ENCODE measurements at regions of chr10 and their contacts with region 1.

Region 1: GRCh38 chr10:35442028-35442427 is 105.7 kb downstream of the CCNY start:
- DNase-seq: peak; percentile 43
- H3K4me3 Mint-ChIP-seq: peak overlapping the region; percentile 16
- H3K27ac Mint-ChIP-seq: peak overlapping the region; percentile 87
- H3K4me1 Mint-ChIP-seq: peaks cover 48% of the 10 kb centered on the region
- H3K27me3 Mint-ChIP-seq: no peaks in the 10 kb centered on the region

Region 2: DNA sequence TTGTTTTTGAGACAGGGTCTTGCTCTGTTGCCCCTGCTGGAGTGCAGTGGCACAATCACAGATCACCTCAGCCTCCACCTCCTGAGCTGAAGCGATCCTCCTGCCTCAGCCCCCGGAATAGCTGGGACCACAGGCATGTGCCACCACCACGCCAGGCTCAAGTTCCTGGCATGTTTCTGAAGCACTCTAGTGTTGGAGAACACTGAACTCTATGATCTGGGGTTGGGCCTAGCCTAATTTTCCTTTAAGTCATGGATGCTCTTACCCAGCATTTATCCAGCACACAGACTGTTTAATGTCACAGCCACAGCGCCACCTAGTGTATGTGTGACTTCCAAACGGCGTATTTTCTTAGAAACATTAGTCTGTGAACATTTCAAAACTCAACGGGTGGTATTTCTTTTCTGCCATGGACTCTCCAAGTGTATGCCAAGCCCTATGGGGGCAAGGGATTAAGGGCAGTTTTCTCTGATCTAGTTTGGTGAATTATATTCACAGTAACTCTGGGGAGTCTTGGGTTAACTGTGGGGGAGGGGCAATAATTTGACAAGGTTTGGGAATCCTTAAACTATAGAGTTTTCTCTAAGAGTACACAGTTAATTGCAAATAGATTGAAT is 223.6 kb before region 1 on chr10:
- CTCF ChIA-PET with region 1: interaction called, 3 read pairs
- POLR2A ChIA-PET with region 1: no interaction called
- intact Hi-C with region 1: loop called (anchors 5 kb)
- DNase-seq: peak; percentile 90
- H3K4me3 Mint-ChIP-seq: peak overlapping the region; percentile 43
- H3K27ac Mint-ChIP-seq: peak overlapping the region; percentile 81
- H3K4me1 Mint-ChIP-seq: peaks cover 48% of the 10 kb centered on the region
- H3K27me3 Mint-ChIP-seq: no peaks in the 10 kb centered on the region

Region 3: DNA sequence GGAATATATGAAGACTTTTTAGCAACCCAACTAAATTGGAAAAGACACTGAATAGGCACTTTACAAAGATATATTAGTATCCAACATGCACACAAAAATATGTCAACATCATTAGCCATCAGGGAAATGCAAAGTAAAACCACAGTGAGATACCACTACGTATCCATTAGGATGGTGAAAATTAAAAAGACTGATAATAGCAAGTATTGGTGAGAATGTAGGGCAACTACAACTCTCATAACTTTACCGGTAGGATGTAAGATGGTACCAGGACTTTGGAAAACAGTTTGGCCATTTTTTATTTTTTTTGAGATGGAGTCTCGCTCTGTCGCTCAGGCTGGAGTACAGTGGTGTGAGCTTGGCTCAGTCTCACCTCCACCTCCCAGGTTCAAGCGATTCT is 119.4 kb before region 1 on chr10:
- CTCF ChIA-PET with region 1: no interaction called
- POLR2A ChIA-PET with region 1: no interaction called
- intact Hi-C with region 1: no loop called
- DNase-seq: no peak
- H3K4me3 Mint-ChIP-seq: no peak overlapping the region
- H3K27ac Mint-ChIP-seq: no peak overlapping the region
- H3K4me1 Mint-ChIP-seq: peaks cover 5% of the 10 kb centered on the region
- H3K27me3 Mint-ChIP-seq: no peaks in the 10 kb centered on the region

Region 4: GRCh38 chr10:35341521-35341920 is 100.5 kb before region 1 on chr10:
- CTCF ChIA-PET with region 1: no interaction called
- POLR2A ChIA-PET with region 1: interaction called, 3 read pairs
- intact Hi-C with region 1: loop called (anchors 1 kb)
- DNase-seq: no peak
- H3K4me3 Mint-ChIP-seq: no peak overlapping the region
- H3K27ac Mint-ChIP-seq: peak overlapping the region; percentile 10
- H3K4me1 Mint-ChIP-seq: peaks cover 71% of the 10 kb centered on the region
- H3K27me3 Mint-ChIP-seq: no peaks in the 10 kb centered on the region

Region 5: DNA sequence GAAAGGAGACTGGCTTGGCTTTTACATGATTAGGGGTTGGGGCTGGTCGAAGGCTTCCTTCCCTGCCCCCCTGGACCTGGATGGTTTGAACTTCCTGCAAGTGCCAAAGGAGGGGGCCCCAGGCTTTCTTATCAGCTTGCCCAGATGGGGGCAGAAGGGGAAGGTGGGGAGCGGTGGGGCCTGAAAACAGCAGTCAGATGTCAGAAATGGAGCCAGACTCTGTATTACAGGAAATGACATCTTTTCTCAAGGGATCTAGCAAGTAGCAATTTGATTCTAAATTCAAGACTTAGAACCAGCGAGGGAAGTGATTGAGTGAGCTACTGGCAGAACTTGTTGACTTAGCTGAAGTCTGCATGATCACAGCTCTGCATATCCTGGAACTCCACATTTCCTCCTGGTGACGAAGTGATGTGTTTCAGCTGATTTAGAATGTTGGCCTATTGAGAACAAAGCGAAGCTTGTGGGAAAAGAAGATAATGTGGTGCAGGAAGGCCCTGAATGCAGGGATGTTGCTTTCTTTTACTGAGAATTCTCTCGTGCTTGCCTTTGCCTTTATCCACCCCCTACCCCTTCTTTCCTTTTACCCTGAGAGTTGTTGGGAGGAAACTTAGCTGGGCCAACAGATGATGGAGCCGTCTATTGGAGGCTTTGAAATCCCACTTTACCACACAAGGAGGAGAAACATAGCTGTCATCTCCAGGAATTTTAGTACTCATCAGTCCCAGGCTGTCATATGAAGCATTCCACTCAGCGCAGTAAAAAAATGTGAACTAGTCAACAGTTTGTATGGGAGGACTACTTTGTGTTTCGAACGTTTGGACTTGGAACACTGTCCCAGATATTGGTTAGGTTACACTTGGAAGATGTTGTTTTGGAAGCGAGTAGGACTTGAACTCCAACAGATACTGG is 62.5 kb before region 1 on chr10:
- CTCF ChIA-PET with region 1: no interaction called
- POLR2A ChIA-PET with region 1: no interaction called
- intact Hi-C with region 1: loop called (anchors 5 kb)
- DNase-seq: peak; percentile 19
- H3K4me3 Mint-ChIP-seq: no peak overlapping the region
- H3K27ac Mint-ChIP-seq: no peak overlapping the region
- H3K4me1 Mint-ChIP-seq: peaks cover 68% of the 10 kb centered on the region
- H3K27me3 Mint-ChIP-seq: no peaks in the 10 kb centered on the region

Region 6: GRCh38 chr10:35540296-35541164 is 98.5 kb after region 1 on chr10:
- CTCF ChIA-PET with region 1: no interaction called
- POLR2A ChIA-PET with region 1: no interaction called
- intact Hi-C with region 1: loop called (anchors 5 kb)
- DNase-seq: no peak
- H3K4me3 Mint-ChIP-seq: no peak overlapping the region
- H3K27ac Mint-ChIP-seq: peak overlapping the region; percentile 56
- H3K4me1 Mint-ChIP-seq: peaks cover 29% of the 10 kb centered on the region
- H3K27me3 Mint-ChIP-seq: no peaks in the 10 kb centered on the region

Region 7: DNA sequence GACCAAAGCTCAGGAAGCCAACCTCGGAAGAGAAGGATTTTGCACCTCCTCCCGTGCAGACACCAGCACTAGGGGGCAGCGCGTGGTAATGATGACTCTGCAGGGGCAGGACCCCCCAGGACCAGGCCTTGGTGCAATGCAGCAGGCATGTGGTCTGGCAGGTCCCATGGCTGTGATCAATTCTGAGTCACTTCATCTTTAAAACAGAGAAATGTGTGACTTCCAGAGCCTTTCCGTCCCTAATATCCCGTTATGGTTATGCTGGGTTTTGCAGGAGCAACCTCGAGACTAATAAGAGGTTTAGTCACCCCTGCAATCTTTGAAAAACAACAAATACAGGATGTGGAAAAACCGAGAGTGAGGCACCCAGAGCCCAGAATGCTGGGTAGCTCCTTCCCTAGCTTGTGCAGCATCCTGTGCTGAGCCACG is 132.9 kb after region 1 on chr10:
- CTCF ChIA-PET with region 1: no interaction called
- POLR2A ChIA-PET with region 1: no interaction called
- intact Hi-C with region 1: no loop called
- DNase-seq: no peak
- H3K4me3 Mint-ChIP-seq: no peak overlapping the region
- H3K27ac Mint-ChIP-seq: no peak overlapping the region
- H3K4me1 Mint-ChIP-seq: no peaks in the 10 kb centered on the region
- H3K27me3 Mint-ChIP-seq: peaks cover 1% of the 10 kb centered on the region

Measured in activated CD4-positive, alpha-beta memory T cell treated with anti-CD3 and anti-CD28 coated beads for 36 hours (primary cell).